CD4-positive, alpha-beta memory T cell (primary cell): ENCODE measurements at regions of chr2 and their contacts with region 1.

Region 1: GRCh38 chr2:69581774-69582581 is 61.6 kb downstream of the AAK1 start:
- DNase-seq: no peak
- H3K4me3 ChIP-seq: no peak overlapping the region
- H3K4me3 Mint-ChIP-seq: peak overlapping the region in 7 of 8 donors; percentile 51 to 81 (median 70)
- H3K27ac ChIP-seq: no peak overlapping the region
- H3K27ac Mint-ChIP-seq: peak overlapping the region; percentile 42 to 92 (median 86)
- H3K4me1 ChIP-seq: peaks cover 98% of the 10 kb centered on the region
- H3K4me1 Mint-ChIP-seq: peaks cover 80 to 95% (median 88%) of the 10 kb centered on the region in 4 donors
- H3K27me3 ChIP-seq: no peaks in the 10 kb centered on the region
- H3K27me3 Mint-ChIP-seq: no peaks in the 10 kb centered on the region

Region 2: DNA sequence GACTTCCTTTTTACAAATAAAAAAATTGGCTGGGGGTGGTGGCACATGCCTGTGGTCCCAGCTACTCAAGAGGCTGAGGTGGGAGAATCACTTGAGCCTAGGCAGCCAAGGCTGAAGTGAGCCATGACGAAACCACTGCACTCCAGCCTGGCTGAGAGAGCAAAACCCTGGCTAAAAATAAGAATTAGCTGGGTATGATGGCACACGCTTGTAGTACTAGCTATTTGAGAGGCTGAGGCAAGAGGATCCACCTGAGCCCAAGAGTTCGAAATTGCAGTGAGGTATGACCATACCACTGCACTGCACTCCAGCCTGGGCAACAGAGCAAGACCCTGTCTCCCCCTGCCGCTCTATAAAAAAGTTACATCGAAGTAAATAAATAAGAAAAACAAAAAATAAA is 228.6 kb before region 1 on chr2:
- CTCF ChIA-PET with region 1: no interaction called
- POLR2A ChIA-PET with region 1: no interaction called
- intact Hi-C with region 1: no loop called
- DNase-seq: no peak
- H3K4me3 ChIP-seq: no peak overlapping the region
- H3K4me3 Mint-ChIP-seq: no peak overlapping the region
- H3K27ac ChIP-seq: no peak overlapping the region
- H3K27ac Mint-ChIP-seq: no peak overlapping the region
- H3K4me1 ChIP-seq: no peaks in the 10 kb centered on the region
- H3K4me1 Mint-ChIP-seq: peaks cover 0 to 5% (median 0%) of the 10 kb centered on the region in 4 donors
- H3K27me3 ChIP-seq: no peaks in the 10 kb centered on the region
- H3K27me3 Mint-ChIP-seq: no peaks in the 10 kb centered on the region

Region 3: GRCh38 chr2:69594341-69594740 is 12.4 kb after region 1 on chr2:
- CTCF ChIA-PET with region 1: interaction called, 3 read pairs
- POLR2A ChIA-PET with region 1: interaction called, 3 read pairs
- intact Hi-C with region 1: loop called (anchors 1 kb)
- DNase-seq: no peak
- H3K4me3 ChIP-seq: no peak overlapping the region
- H3K4me3 Mint-ChIP-seq: peak overlapping the region in 1 of 8 donors; percentile 4
- H3K27ac ChIP-seq: no peak overlapping the region
- H3K27ac Mint-ChIP-seq: peak overlapping the region in 4 of 7 donors; percentile 6 to 62 (median 30)
- H3K4me1 ChIP-seq: peaks cover 80% of the 10 kb centered on the region
- H3K4me1 Mint-ChIP-seq: peaks cover 59 to 88% (median 78%) of the 10 kb centered on the region in 4 donors
- H3K27me3 ChIP-seq: no peaks in the 10 kb centered on the region
- H3K27me3 Mint-ChIP-seq: no peaks in the 10 kb centered on the region

Region 4: GRCh38 chr2:69946351-69947077 is 364.5 kb after region 1 on chr2:
- CTCF ChIA-PET with region 1: no interaction called
- POLR2A ChIA-PET with region 1: no interaction called
- intact Hi-C with region 1: no loop called
- DNase-seq: peak; percentile 50 to 79 (median 64)
- H3K4me3 ChIP-seq: peak overlapping the region in 1 of 2 donors; percentile 21
- H3K4me3 Mint-ChIP-seq: peak overlapping the region in 7 of 8 donors; percentile 47 to 82 (median 64)
- H3K27ac ChIP-seq: peak overlapping the region; percentile 39
- H3K27ac Mint-ChIP-seq: peak overlapping the region; percentile 87 to 96 (median 90)
- H3K4me1 ChIP-seq: peaks cover 26% of the 10 kb centered on the region
- H3K4me1 Mint-ChIP-seq: peaks cover 24 to 36% (median 31%) of the 10 kb centered on the region in 4 donors
- H3K27me3 ChIP-seq: no peaks in the 10 kb centered on the region
- H3K27me3 Mint-ChIP-seq: no peaks in the 10 kb centered on the region